Heart right ventricle (tissue), 16 donors: ENCODE measurements at regions of chr11 and their contacts with region 1.

Region 1: DNA sequence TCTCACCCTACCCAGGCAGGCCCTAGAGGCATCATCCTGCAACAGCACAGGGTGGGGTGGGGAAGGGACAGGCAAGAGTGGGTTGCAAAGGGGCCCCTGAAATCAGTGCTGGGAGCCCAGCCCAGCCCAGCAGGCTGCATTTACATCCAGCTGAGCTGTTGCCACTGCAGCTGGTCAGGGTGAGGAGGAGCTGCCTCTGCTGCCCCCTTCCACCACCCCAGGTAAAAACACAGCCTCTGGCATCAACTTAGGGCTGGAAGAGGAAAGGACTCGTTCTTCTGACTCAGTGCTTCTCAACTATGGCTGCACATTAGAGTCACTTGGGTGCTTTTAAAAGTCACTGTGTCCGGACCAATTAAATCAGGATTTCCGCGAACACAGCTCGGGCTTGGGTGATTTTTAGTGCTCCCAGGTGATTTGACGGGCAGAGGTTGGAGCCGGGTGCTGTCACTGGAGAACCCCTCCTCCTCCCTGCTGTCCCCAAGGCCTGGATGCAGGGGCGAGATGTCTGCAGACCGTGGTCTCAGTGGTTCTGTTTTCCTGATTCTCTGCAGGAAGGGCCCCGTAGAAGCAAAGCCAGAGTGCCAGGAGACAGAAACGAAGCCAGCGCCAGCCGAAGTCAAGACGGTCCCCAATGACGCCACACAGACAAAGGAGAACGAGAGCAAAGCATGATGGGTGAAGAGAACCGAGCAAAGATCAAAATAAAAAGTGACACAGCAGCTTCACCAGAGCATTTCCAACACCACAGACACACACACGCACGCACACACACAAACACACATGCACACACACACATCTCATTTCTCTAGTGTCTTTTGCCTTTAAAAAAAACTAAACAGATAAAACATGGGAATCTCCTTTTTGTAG is 39.4 kb upstream of the TTC12 start:
- DNase-seq: no peak
- ATAC-seq: peak in 3 of 8 donors; percentile 28 to 48 (median 41)
- H3K4me3 ChIP-seq: no peak overlapping the region
- H3K27ac ChIP-seq: no peak overlapping the region
- H3K4me1 ChIP-seq: peaks cover 0 to 5% (median 0%) of the 10 kb centered on the region in 9 donors
- H3K27me3 ChIP-seq: no peaks in the 10 kb centered on the region
- CTCF ChIP-seq: peak in 5 of 9 donors; percentile 14 to 35 (median 20)

Region 2: DNA sequence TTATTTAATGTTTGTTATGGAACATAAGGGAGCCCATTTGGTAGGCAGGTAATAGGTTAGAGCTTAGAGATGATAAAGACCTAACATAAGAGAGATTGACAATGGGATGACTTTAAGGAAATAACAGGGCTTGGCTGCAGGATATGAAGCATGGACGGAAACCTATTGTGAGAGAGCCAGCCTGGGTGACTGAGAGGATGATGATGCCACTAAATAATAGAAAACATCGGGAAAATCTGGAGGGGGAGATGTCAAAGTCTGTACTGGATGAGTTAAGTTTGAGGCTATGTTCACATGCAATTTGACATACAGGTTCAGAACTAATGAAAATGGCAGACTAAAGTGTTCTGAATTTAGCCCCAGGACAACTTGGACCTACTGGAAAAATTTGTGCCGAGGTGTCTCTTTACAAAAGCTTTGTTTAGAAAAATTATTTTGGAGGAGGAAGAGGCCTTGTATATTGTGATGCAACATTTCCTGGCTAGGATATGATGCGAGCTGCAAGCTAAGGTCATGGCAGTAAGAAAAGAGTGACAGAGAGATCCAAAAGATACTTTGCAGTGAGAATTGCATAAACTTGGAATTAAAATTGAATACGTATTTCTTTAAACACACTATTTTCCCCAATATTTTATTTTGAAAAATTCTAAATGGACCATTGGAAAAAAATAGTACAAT is 675.0 kb before region 1 on chr11:
- intact Hi-C with region 1: loop called in 1 of 10 experiments (anchors 5 kb)
- DNase-seq: no peak
- ATAC-seq: peak in 1 of 8 donors; percentile 48
- H3K4me3 ChIP-seq: no peak overlapping the region
- H3K27ac ChIP-seq: no peak overlapping the region
- H3K4me1 ChIP-seq: peaks cover 0 to 6% (median 0%) of the 10 kb centered on the region in 9 donors
- H3K27me3 ChIP-seq: no peaks in the 10 kb centered on the region
- CTCF ChIP-seq: no peak

Region 3: GRCh38 chr11:112644410-112645131 is 630.4 kb before region 1 on chr11:
- intact Hi-C with region 1: no loop called
- DNase-seq: no peak
- ATAC-seq: no peak
- H3K4me3 ChIP-seq: no peak overlapping the region
- H3K27ac ChIP-seq: no peak overlapping the region
- H3K4me1 ChIP-seq: peaks cover 0 to 1% (median 0%) of the 10 kb centered on the region in 9 donors
- H3K27me3 ChIP-seq: no peaks in the 10 kb centered on the region
- CTCF ChIP-seq: no peak

Region 4: GRCh38 chr11:112689851-112690250 is 585.1 kb before region 1 on chr11:
- intact Hi-C with region 1: no loop called
- DNase-seq: no peak
- ATAC-seq: no peak
- H3K4me3 ChIP-seq: no peak overlapping the region
- H3K27ac ChIP-seq: no peak overlapping the region
- H3K4me1 ChIP-seq: no peaks in the 10 kb centered on the region
- H3K27me3 ChIP-seq: no peaks in the 10 kb centered on the region
- CTCF ChIP-seq: no peak

Region 5: GRCh38 chr11:113001709-113002108 is 273.2 kb before region 1 on chr11:
- intact Hi-C with region 1: no loop called
- DNase-seq: no peak
- ATAC-seq: peak in 3 of 8 donors; percentile 27 to 46 (median 39)
- H3K4me3 ChIP-seq: no peak overlapping the region
- H3K27ac ChIP-seq: peak overlapping the region in 2 of 10 donors; percentile 6 to 9
- H3K4me1 ChIP-seq: peaks cover 2 to 45% (median 12%) of the 10 kb centered on the region in 9 donors
- H3K27me3 ChIP-seq: no peaks in the 10 kb centered on the region
- CTCF ChIP-seq: no peak

Region 6: DNA sequence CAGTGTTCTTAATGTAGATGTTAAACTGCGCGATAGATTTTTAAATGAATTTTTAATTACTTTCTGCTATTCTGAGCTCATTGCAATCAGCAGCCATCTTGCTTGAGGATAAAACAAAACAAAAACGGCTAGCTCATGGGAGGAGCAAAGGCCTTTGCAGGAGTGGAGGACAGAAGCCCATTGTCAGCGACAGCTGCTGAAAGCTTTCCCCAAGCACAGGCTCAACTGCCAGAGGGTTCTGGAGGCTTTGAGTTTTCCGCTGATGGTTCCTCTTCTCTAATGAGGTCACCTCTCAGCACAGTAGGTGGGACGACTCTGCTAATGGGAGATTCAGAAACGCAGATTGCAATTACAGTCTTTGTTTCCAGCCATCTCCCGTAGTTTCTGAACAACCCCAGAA is 127.7 kb before region 1 on chr11:
- intact Hi-C with region 1: loop called in 1 of 10 experiments (anchors 10 kb)
- DNase-seq: no peak
- ATAC-seq: peak in 7 of 8 donors; percentile 56 to 77 (median 71)
- H3K4me3 ChIP-seq: no peak overlapping the region
- H3K27ac ChIP-seq: peak overlapping the region in 4 of 10 donors; percentile 9 to 48 (median 16)
- H3K4me1 ChIP-seq: peaks cover 0 to 14% (median 11%) of the 10 kb centered on the region in 9 donors
- H3K27me3 ChIP-seq: no peaks in the 10 kb centered on the region
- CTCF ChIP-seq: no peak

Region 7: DNA sequence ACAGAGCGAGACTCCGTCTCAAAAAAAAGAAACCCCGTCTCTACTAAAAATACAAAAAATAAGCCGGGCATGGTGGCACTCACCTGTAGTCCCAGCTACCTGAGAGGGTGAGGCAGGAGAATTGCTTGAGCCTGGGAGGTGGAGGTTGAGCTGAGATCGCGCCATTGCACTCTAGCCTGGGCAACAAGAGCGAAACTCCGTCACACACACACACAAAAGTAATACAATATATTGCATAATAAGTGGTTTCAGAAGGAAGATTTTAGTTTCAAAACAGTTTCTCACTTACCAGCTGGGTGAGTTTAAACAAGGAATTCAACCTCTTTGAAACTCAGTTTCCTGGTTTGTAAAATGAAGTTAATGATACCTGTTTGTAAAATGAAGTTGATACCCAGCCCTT is 667.3 kb after region 1 on chr11:
- intact Hi-C with region 1: no loop called
- DNase-seq: no peak
- ATAC-seq: no peak
- H3K4me3 ChIP-seq: no peak overlapping the region
- H3K27ac ChIP-seq: no peak overlapping the region
- H3K4me1 ChIP-seq: no peaks in the 10 kb centered on the region
- H3K27me3 ChIP-seq: peaks cover 0 to 6% (median 0%) of the 10 kb centered on the region in 7 donors
- CTCF ChIP-seq: no peak